HEK293 (cell line): ENCODE measurements at regions of chr7 and their contacts with region 1.

Region 1: DNA sequence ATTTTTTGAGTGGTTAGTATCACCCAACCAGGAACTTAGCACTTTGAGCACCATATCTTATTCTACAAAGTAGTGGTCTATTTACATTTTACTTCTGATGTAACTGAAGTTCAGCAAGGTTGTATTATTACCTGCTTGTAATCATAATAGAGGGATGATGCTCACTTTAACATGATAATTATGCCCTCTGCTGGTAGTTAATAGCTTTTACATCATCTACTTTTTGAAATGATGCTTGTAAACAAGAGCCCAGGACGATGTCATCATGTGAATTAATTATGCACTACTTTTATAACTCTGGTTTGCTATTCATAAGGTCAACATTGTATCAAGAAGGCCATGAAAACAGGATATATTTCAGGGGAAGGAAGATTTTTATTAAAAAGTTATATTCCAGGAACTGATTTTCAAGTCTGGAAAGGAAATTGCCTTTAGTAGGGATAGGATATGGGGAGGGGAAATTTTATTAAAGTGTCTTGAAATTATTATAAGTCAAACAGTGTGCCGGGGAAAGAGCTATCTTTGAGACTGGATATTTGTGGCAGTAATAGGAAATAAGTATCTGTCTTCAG is 80.3 kb upstream of the SCIN start:
- H3K4me3 ChIP-seq: no peak overlapping the region
- H3K27ac ChIP-seq: no peak overlapping the region
- H3K4me1 ChIP-seq: peaks cover 3% of the 10 kb centered on the region; the same call in 1 of the 2 replicates
- CTCF ChIP-seq: 0 out of 2 replicates have a peak, but pooled peaks have one; percentile 8

Region 2: GRCh38 chr7:12389089-12389700 is 101.0 kb before region 1 on chr7:
- CTCF ChIA-PET with region 1: interaction called, 12 read pairs
- POLR2A ChIA-PET with region 1: no interaction called
- H3K4me3 ChIP-seq: no peak overlapping the region
- H3K27ac ChIP-seq: no peak overlapping the region
- H3K4me1 ChIP-seq: no peaks in the 10 kb centered on the region
- CTCF ChIP-seq: no peak

Region 3: GRCh38 chr7:12436896-12437535 is 53.2 kb before region 1 on chr7:
- CTCF ChIA-PET with region 1: interaction called, 26 read pairs
- POLR2A ChIA-PET with region 1: no interaction called
- H3K4me3 ChIP-seq: no peak overlapping the region
- H3K27ac ChIP-seq: no peak overlapping the region
- H3K4me1 ChIP-seq: no peaks in the 10 kb centered on the region
- CTCF ChIP-seq: no peak

Region 4: GRCh38 chr7:12475362-12476063 is 14.7 kb before region 1 on chr7:
- CTCF ChIA-PET with region 1: interaction called, 30 read pairs
- POLR2A ChIA-PET with region 1: no interaction called
- H3K4me3 ChIP-seq: no peak overlapping the region
- H3K27ac ChIP-seq: no peak overlapping the region
- H3K4me1 ChIP-seq: no peaks in the 10 kb centered on the region
- CTCF ChIP-seq: no peak

Region 5: DNA sequence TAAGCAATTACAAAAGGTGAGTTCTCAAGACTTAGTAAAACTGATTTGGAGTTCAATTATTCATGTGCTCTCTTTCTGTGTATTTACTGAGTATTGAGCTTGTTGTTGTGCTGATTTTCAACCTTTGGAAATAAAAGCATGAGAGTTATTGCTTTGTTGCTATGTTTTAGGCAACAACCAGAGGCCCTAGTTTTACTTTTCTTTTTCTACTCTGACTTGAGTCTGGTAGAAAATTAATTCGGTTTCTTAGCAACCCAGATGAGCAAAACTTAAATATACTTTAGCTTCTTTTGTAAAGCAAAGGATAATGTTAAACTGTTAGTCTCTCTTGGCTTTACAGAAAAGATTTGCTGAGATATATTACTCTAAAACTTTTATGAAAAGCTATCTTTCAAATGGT is 13.9 kb after region 1 on chr7:
- CTCF ChIA-PET with region 1: interaction called, 11 read pairs
- POLR2A ChIA-PET with region 1: no interaction called
- H3K4me3 ChIP-seq: no peak overlapping the region
- H3K27ac ChIP-seq: no peak overlapping the region
- H3K4me1 ChIP-seq: no peaks in the 10 kb centered on the region
- CTCF ChIP-seq: no peak

Region 6: DNA sequence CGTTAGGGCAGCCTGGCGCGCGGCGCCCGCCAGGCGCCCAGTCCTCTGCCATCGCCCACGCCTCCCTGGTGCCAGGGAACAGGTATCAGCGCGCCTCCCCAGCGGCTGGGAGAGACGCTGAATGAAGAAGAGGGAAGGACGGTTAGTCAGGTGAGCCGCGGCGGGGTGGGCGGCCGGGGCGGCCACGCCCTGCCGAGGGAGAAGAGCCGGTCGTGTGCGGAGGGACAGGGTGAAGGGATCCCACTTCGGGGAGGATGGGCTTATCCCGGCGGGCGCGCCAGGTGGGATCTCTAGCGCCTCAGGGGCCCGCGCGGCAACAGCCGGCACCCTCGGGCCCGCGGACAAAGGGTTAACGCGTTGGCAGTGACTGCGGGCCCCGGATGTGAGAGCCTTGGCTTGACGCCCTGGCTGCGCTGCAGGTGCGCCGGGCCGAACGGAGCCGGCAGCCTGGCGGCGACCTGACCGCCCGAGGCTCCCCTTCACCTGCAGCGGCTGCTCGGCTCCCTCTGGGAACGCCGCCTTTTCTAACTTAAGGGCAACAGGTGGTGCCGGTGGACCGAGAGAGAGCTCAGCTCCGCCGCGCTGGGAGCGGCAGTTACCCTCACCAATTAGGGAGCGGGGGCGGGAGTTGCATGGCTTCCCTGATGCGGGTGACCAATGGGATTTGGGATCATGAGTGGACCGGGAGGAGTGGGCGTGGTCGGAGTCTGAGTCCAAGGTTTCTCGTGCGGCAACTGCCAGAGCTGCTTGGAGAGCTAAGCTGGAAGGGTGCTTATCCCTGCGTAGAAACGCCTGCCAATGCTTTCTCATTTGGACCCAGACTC is 196.9 kb after region 1 on chr7 and contains the start of gene ARL4A:
- CTCF ChIA-PET with region 1: no interaction called
- POLR2A ChIA-PET with region 1: no interaction called
- H3K4me3 ChIP-seq: peak within 1 kb of the TSS; percentile 84
- H3K27ac ChIP-seq: peak within 1 kb of the TSS; percentile 92
- H3K4me1 ChIP-seq: no peaks in the 10 kb centered on the region
- CTCF ChIP-seq: peak; percentile 82